Right ventricle myocardium inferior (tissue), 1 donor: ENCODE measurements at regions of chr15 and their contacts with region 1.

Region 1: GRCh38 chr15:40323239-40323952 is at the start of gene INAFM2:
- DNase-seq: peak; percentile 94
- ATAC-seq: peak; percentile 91
- total RNA-seq, gene INAFM2: 55.6 TPM

Region 2: GRCh38 chr15:40421246-40422157 is 98.1 kb after region 1 on chr15:
- intact Hi-C with region 1: loop called (anchors 1 kb)
- DNase-seq: peak; percentile 93
- ATAC-seq: peak; percentile 92